ENCODE measurements at regions of chr22 and their contacts with region 1.

Region 1: GRCh38 chr22:31046539-31047226 is 34.4 kb upstream of the SMTN start:
- DNase-seq: peak; percentile 45
- ATAC-seq: peak; percentile 59; the same call in 2 of the 3 replicates
- H3K4me3 ChIP-seq: 0 out of 6 replicates have a peak overlapping the region, but pooled peaks of 1 of the 3 experiments have one; percentile 7
- H3K27ac ChIP-seq: peak overlapping the region; percentile 56
- H3K4me1 ChIP-seq: peaks cover 51% of the 10 kb centered on the region
- H3K27me3 ChIP-seq: no peaks in the 10 kb centered on the region
- CTCF ChIP-seq: no peak; the same call in 1 of the 2 replicates
- EP300 ChIP-seq: no peak; a peak in 1 of 4 replicates
- POLR2A ChIP-seq: no peak
- RAD21 ChIP-seq: no peak

Region 2: DNA sequence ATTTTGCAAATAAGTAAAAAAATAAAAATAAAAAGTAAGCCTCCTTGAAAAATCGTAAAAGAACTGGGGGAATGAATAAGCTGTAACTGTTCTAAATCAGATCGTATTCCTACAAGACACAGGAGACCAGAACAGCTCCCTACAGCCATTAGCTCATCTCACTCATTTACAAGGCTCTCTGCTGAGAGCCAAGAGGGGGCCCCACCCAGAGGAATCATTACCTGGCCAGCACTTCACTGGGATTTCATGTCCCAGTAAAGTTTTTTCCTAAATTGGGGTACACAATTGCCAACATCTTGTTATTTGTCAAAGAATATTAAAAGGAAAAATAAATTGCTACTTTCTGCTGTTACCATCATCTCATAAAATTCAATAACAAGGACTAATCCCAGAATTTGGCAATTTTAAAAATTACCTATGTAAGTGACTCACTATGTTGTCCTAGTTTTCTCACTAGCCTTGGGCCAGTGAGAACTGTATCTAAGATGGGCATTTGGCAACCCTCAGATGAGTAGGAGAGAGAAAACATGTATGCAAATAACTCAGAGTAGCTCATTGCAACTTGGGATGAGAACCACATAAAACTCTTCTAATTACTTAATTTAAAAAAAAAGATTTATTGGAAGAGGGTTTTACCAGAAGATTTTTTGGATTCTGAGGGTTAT is 16.0 kb after region 1 on chr22:
- CTCF ChIA-PET with region 1: no interaction called
- POLR2A ChIA-PET with region 1: interaction called, 10 read pairs
- in situ Hi-C with region 1: no loop called
- intact Hi-C with region 1: no loop called
- DNase-seq: no peak
- ATAC-seq: no peak
- H3K4me3 ChIP-seq: no peak overlapping the region
- H3K27ac ChIP-seq: no peak overlapping the region
- H3K4me1 ChIP-seq: peaks cover 50% of the 10 kb centered on the region
- H3K27me3 ChIP-seq: no peaks in the 10 kb centered on the region
- CTCF ChIP-seq: no peak
- EP300 ChIP-seq: no peak
- POLR2A ChIP-seq: no peak
- RAD21 ChIP-seq: no peak